Activated CD8-positive, alpha-beta T cell treated with anti-CD3 and anti-CD28 coated beads, Interleukin-2, amount 10 ng/mL, durations not matched to agents 7 days and 5 days (primary cell): ENCODE measurements at regions of chr5 and their contacts with region 1.

Region 1: GRCh38 chr5:100903039-100903887 is at the start of gene ST8SIA4:
- DNase-seq: peak; percentile 97
- ATAC-seq: peak; percentile 79
- H3K4me3 Mint-ChIP-seq: peak within 1 kb of the TSS; percentile 99
- H3K27ac Mint-ChIP-seq: peak within 1 kb of the TSS; percentile 97
- H3K4me1 Mint-ChIP-seq: peaks cover 40% of the 10 kb centered on the region
- H3K27me3 Mint-ChIP-seq: no peaks in the 10 kb centered on the region
- total RNA-seq, gene ST8SIA4: 35.8 to 37.5 TPM

Region 2: GRCh38 chr5:100535060-100536005 is 367.9 kb before region 1 on chr5 and contains the start of gene FAM174A:
- CTCF ChIA-PET with region 1: interaction called, 4 read pairs
- POLR2A ChIA-PET with region 1: interaction called, 14 read pairs
- DNase-seq: peak; percentile 96
- ATAC-seq: peak; percentile 93
- H3K4me3 Mint-ChIP-seq: peak within 1 kb of the TSS; percentile 97
- H3K27ac Mint-ChIP-seq: peak within 1 kb of the TSS; percentile 91
- H3K4me1 Mint-ChIP-seq: peaks cover 18% of the 10 kb centered on the region
- H3K27me3 Mint-ChIP-seq: no peaks in the 10 kb centered on the region
- total RNA-seq, gene FAM174A: 2.7 to 4.4 TPM

Region 3: DNA sequence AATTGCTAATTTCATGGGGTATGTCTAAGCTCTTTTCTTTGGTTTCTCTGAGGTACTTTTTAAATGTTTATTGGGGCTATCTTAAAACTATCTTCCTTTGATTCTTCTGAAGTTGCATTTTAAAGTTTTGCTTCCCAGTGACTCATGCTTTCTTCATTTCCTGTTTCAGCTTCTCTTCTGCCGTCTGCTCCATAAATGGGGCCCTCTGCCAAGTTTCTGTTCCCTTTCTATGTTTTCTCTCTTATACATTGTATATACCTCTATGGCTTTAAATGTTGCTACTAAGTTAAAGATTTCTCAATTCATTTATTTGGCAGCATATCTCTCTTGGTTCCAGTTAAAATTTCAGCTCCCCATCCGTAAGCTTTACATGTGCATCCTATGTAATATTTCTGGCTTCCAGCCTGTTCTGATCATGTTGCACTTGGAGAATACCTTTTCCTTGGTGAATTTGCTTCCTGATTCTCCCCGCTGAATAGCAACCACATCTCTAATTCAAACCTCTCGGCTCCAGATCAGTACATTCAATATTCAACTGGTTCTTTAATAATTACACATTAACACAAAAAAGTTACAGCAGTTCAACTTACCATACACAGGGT is 125.5 kb before region 1 on chr5:
- CTCF ChIA-PET with region 1: interaction called, 57 read pairs
- POLR2A ChIA-PET with region 1: interaction called, 65 read pairs
- DNase-seq: no peak
- ATAC-seq: peak; percentile 40
- H3K4me3 Mint-ChIP-seq: peak overlapping the region; percentile 24
- H3K27ac Mint-ChIP-seq: peak overlapping the region; percentile 37
- H3K4me1 Mint-ChIP-seq: peaks cover 37% of the 10 kb centered on the region
- H3K27me3 Mint-ChIP-seq: no peaks in the 10 kb centered on the region

Region 4: DNA sequence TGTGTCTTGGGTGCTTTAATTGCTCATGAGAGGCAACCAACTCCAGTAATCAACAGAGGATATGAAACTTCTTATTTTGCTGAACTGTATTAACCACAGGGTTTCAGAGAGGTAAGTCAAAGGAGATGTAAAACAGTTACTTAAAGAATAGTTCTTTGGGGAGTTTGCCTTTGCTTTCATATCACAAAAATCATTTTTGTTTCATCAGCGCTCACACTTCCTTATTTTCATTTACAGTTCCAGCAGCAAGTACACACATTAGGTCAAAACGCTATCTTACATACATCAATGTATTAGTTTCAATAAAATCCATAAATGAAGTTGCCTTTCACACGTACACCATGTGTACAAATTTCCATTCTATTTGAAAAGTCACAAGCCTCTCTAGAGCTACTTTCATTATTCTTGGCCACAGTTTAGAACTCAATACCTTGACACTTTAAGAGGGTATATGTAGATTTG is 50.2 kb before region 1 on chr5:
- CTCF ChIA-PET with region 1: interaction called, 13 read pairs
- POLR2A ChIA-PET with region 1: interaction called, 13 read pairs
- DNase-seq: no peak
- ATAC-seq: peak; percentile 82
- H3K4me3 Mint-ChIP-seq: peak overlapping the region; percentile 68
- H3K27ac Mint-ChIP-seq: peak overlapping the region; percentile 91
- H3K4me1 Mint-ChIP-seq: peaks cover 36% of the 10 kb centered on the region
- H3K27me3 Mint-ChIP-seq: no peaks in the 10 kb centered on the region

Region 5: GRCh38 chr5:100890461-100891008 is 12.7 kb before region 1 on chr5:
- CTCF ChIA-PET with region 1: interaction called, 71 read pairs
- POLR2A ChIA-PET with region 1: interaction called, 188 read pairs
- DNase-seq: no peak
- ATAC-seq: peak; percentile 30
- H3K4me3 Mint-ChIP-seq: peak overlapping the region; percentile 74
- H3K27ac Mint-ChIP-seq: peak overlapping the region; percentile 91
- H3K4me1 Mint-ChIP-seq: peaks cover 63% of the 10 kb centered on the region
- H3K27me3 Mint-ChIP-seq: no peaks in the 10 kb centered on the region

Region 6: DNA sequence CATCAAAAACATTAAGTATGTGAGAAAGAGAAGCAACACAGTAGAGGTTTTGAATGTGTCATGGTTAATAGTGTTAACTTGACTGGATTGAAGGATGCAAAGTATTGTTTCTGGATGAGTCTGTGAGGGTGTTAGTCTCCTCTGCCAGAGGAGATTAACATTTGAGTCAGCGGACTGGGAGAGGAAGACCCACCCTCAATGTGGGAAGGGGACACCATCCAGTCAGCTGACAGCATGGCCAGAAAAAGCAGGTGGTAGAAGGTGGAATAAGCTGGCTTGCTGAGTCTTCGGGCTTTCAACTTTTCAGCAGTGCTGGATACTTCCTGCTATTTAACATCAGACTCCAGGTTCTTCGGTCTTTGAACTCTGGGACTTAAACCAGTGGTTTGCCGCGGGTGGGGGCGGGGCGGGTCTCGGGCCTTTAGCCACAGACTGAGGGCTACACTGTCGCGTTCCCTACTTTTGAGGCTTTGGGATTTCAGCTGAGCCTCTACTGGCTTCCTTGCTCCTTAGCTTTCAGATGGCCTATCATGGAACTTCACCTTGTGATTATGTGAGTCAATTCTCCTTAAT is 309.8 kb after region 1 on chr5:
- CTCF ChIA-PET with region 1: no interaction called
- POLR2A ChIA-PET with region 1: no interaction called
- DNase-seq: no peak
- ATAC-seq: no peak
- H3K4me3 Mint-ChIP-seq: no peak overlapping the region
- H3K27ac Mint-ChIP-seq: no peak overlapping the region
- H3K4me1 Mint-ChIP-seq: no peaks in the 10 kb centered on the region
- H3K27me3 Mint-ChIP-seq: no peaks in the 10 kb centered on the region

Region 7: GRCh38 chr5:101424530-101425175 is 521.4 kb after region 1 on chr5:
- CTCF ChIA-PET with region 1: no interaction called
- POLR2A ChIA-PET with region 1: no interaction called
- DNase-seq: no peak
- ATAC-seq: no peak
- H3K4me3 Mint-ChIP-seq: no peak overlapping the region
- H3K27ac Mint-ChIP-seq: no peak overlapping the region
- H3K4me1 Mint-ChIP-seq: no peaks in the 10 kb centered on the region
- H3K27me3 Mint-ChIP-seq: no peaks in the 10 kb centered on the region